ENCODE measurements at regions of chr6 and their contacts with region 1.

Region 1: GRCh38 chr6:102309700-102310099 is 916.2 kb downstream of the GRIK2 start:
- DNase-seq: no peak
- ATAC-seq: no peak
- H3K4me3 ChIP-seq: no peak overlapping the region
- H3K27ac ChIP-seq: no peak overlapping the region
- H3K4me1 ChIP-seq: no peaks in the 10 kb centered on the region
- H3K27me3 ChIP-seq: no peaks in the 10 kb centered on the region
- CTCF ChIP-seq: no peak

Region 2: DNA sequence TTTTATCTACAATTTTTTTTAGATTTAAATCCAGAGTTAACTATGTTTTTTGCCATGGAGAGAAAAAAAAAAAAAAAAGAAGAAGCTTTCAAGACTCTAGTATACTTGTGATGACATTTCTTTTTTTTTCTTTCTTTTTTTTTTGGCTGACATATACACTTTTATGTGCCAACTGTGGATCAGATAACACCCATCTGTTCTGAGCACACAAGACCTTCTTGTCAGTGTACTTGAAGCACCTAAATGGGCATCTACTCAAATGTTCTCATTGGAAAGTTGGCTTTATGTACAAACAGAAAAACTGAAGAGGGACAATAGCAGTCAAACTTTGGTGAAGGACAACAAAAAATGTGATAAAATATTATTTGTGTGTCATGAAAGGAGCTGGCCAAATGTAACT is 11.6 kb before region 1 on chr6:
- CTCF ChIA-PET with region 1: no interaction called
- POLR2A ChIA-PET with region 1: interaction called, 11 read pairs
- in situ Hi-C with region 1: no loop called
- intact Hi-C with region 1: no loop called
- DNase-seq: no peak
- ATAC-seq: no peak
- H3K4me3 ChIP-seq: no peak overlapping the region
- H3K27ac ChIP-seq: no peak overlapping the region
- H3K4me1 ChIP-seq: no peaks in the 10 kb centered on the region
- H3K27me3 ChIP-seq: no peaks in the 10 kb centered on the region
- CTCF ChIP-seq: no peak

Measured in Panc1 (cell line).